ENCODE measurements at regions of chr11 and their contacts with region 1.

Region 1: DNA sequence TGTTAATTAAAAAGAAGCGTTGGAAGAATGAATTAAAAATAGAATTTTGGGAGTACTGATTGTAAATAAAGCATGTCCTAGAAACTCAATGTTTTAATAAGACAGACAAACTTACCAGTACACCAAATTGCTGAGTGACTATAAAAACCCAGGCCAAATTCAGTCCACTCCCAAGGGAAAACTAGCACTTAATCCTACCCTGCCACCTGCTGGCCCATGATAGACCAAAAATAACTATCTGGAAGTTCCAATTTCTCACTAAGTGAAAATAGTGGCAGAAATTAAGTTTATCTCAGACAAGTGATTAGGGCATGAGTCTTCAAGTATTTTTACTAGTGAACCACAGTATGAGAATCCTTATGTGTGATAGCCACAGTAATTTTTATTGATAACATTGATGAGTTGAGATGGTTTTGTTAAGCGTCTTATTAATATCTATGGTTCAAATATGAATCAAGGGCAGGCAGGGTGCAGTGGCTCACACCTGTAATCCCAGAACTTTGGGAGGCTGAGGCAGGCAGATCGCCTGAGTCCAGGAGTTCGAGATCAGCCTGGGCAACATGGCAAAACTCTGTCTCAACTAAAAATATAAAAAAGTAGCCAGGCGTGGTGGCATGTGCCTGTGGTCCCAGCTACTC is 9.8 kb upstream of the DDX10 start:
- DNase-seq: peak; percentile 35
- CTCF ChIP-seq: peak; percentile 21

Region 2: DNA sequence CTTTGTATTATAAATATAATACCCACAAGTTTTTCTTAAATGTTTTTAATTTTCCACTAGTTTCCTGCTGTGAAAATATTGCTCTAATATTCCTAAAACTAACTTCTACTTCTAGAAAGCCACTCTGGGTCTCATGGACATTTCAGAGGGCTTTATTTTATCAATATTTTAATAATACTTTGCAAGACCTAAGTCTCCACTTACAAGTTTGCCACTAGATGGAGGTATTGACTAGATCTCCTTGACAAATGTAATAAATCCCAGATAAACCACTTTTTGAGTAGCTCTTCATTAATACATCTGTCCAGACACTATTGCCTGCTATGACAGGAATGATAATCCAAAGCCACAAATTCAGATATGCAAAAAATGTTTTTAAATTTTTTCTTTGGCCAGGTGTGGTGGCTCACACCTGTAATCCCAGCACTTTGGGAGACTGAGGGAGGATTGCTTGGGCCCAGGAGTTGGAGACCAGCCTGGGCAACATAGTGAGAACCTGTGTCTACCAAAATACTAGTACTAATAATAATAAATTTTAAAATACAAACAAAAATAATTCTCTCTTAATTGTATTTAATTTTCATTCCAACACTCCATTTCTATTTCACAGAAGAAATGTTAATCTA is 537.3 kb before region 1 on chr11:
- in situ Hi-C with region 1: loop called (anchors 10 kb)
- DNase-seq: peak; percentile 50
- CTCF ChIP-seq: peak; percentile 16

Measured in GM13976 (cell line).